Endothelial cell of umbilical vein (primary cell): ENCODE measurements at regions of chr5 and their contacts with region 1.

Region 1: GRCh38 chr5:113806250-113806649 is 292.8 kb downstream of the YTHDC2 start:
- DNase-seq: peak; percentile 71
- H3K4me3 ChIP-seq: peak overlapping the region in 1 of 3 experiments; percentile 24
- H3K27ac ChIP-seq: peak overlapping the region; percentile 2
- H3K4me1 ChIP-seq: peaks cover 14% of the 10 kb centered on the region
- H3K27me3 ChIP-seq: no peaks in the 10 kb centered on the region
- CTCF ChIP-seq: peak; percentile 34 to 38
- POLR2A ChIP-seq: no peak

Region 2: DNA sequence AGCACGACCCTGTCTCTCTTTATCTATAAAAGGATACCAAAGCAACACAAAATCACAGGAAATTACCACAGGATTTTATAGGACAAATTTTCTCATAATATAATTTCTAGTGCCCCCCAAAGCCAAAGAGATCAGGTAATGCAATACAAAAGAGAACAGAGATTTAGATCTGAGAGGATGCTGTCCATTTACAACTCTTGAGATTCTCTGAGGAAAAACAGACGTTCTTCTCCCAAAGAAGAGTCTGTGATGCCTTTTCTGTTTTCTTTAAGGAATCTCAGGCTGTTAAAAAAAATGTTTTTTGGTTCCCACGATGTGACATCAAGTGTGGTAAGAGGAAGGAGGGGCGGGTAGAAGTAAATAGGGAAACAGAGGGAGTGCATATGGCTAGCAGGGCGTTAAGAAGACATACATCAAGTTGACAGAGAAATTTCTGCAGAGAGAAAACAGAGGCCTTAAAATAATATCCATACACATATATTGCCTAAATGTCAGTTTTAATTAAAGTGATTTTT is 18.1 kb before region 1 on chr5:
- CTCF ChIA-PET with region 1: no interaction called
- POLR2A ChIA-PET with region 1: no interaction called
- dilution Hi-C with region 1: no loop called
- intact Hi-C with region 1: no loop called
- DNase-seq: no peak
- H3K4me3 ChIP-seq: no peak overlapping the region
- H3K27ac ChIP-seq: no peak overlapping the region
- H3K4me1 ChIP-seq: no peaks in the 10 kb centered on the region
- H3K27me3 ChIP-seq: no peaks in the 10 kb centered on the region
- CTCF ChIP-seq: no peak
- POLR2A ChIP-seq: no peak

Region 3: DNA sequence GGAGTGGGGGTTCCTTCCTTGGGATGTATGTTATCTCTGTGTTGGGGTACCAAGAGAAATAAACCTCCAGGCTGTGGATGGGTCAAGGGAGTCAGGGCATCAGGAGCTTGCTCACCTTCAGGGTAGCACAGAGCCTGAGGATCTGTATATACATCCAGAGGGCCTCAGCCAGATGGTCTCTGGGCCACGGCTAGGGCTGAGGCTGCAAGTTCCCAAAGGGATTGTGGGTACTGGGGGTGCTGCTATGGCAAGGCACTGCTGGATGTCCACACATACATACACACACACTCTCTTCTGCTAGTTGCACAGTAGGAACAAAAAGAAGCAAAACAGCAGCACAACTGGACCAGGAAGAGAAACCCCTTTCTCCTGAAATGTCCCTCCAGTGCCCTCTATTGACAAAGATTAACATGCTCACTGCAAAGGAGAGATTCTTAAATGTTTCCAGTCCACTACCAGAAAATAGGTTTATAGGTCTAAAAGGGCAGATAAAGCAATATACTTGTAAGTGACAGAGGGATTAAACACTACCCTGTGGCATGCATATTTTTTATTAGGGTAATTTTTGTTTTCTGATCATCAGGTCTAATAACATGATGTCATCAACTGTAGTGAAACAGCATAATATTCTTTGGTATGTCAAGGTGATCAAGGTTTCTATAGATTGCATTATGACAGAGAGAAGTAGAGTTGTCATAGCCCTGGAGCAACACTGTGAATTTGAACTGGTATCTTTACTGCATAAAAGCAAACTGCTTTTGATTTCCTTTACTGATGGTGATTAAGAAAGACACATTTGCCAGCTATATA is 499.4 kb after region 1 on chr5:
- CTCF ChIA-PET with region 1: no interaction called
- POLR2A ChIA-PET with region 1: no interaction called
- dilution Hi-C with region 1: no loop called
- intact Hi-C with region 1: loop called (anchors 5 kb)
- DNase-seq: peak; percentile 41
- H3K4me3 ChIP-seq: no peak overlapping the region
- H3K27ac ChIP-seq: no peak overlapping the region
- H3K4me1 ChIP-seq: no peaks in the 10 kb centered on the region
- H3K27me3 ChIP-seq: peaks cover 4 to 5% of the 10 kb centered on the region in 2 experiments
- CTCF ChIP-seq: peak in 1 of 2 donors; percentile 32
- POLR2A ChIP-seq: no peak